ENCODE measurements at regions of chr20 and their contacts with region 1.

Region 1: GRCh38 chr20:57391074-57391554 is at the start of gene RBM38:
- DNase-seq: peak; percentile 37 to 62 (median 62)
- H3K4me3 ChIP-seq: peak within 1 kb of the TSS; percentile 67 to 84 (median 68)
- H3K4me3 Mint-ChIP-seq: peak within 1 kb of the TSS; percentile 90 to 93
- H3K27ac ChIP-seq: peak within 1 kb of the TSS; percentile 51 to 67
- H3K27ac Mint-ChIP-seq: peak within 1 kb of the TSS; percentile 34 to 92 (median 75)
- H3K4me1 ChIP-seq: peaks cover 45 to 55% of the 10 kb centered on the region in 2 donors
- H3K4me1 Mint-ChIP-seq: peaks cover 55% of the 10 kb centered on the region
- H3K27me3 ChIP-seq: no peaks in the 10 kb centered on the region
- H3K27me3 Mint-ChIP-seq: peaks cover 2 to 12% (median 3%) of the 10 kb centered on the region in 3 donors
- CTCF ChIP-seq: no peak
- polyA plus RNA-seq, gene RBM38: 7.5 to 48.3 (median 17.8) TPM

Region 2: GRCh38 chr20:57450419-57450818 is 59.3 kb after region 1 on chr20:
- intact Hi-C with region 1: loop called in 1 of 2 experiments (anchors 5 kb)
- DNase-seq: peak; percentile 86 to 92 (median 92)
- H3K4me3 ChIP-seq: peak overlapping the region in 1 of 3 experiments; percentile 49
- H3K4me3 Mint-ChIP-seq: peak overlapping the region; percentile 72 to 85
- H3K27ac ChIP-seq: peak overlapping the region; percentile 77 to 84
- H3K27ac Mint-ChIP-seq: peak overlapping the region; percentile 94 to 99 (median 98)
- H3K4me1 ChIP-seq: peaks cover 49 to 63% of the 10 kb centered on the region in 2 donors
- H3K4me1 Mint-ChIP-seq: peaks cover 67% of the 10 kb centered on the region
- H3K27me3 ChIP-seq: no peaks in the 10 kb centered on the region
- H3K27me3 Mint-ChIP-seq: peaks cover 0 to 5% (median 4%) of the 10 kb centered on the region in 3 donors
- CTCF ChIP-seq: no peak

Region 3: GRCh38 chr20:57473246-57474048 is 82.3 kb after region 1 on chr20:
- intact Hi-C with region 1: loop called in 1 of 2 experiments (anchors 10 kb)
- DNase-seq: peak; percentile 71 to 85 (median 85)
- H3K4me3 ChIP-seq: peak overlapping the region in 1 of 3 experiments; percentile 66
- H3K4me3 Mint-ChIP-seq: peak overlapping the region; percentile 50 to 78
- H3K27ac ChIP-seq: peak overlapping the region; percentile 58 to 77
- H3K27ac Mint-ChIP-seq: peak overlapping the region; percentile 83 to 93 (median 91)
- H3K4me1 ChIP-seq: peaks cover 69 to 72% of the 10 kb centered on the region in 2 donors
- H3K4me1 Mint-ChIP-seq: peaks cover 63% of the 10 kb centered on the region
- H3K27me3 ChIP-seq: no peaks in the 10 kb centered on the region
- H3K27me3 Mint-ChIP-seq: peaks cover 7 to 20% (median 12%) of the 10 kb centered on the region in 3 donors
- CTCF ChIP-seq: peak; percentile 39

Region 4: GRCh38 chr20:57530327-57530981 is 139.3 kb after region 1 on chr20:
- intact Hi-C with region 1: no loop called
- DNase-seq: no peak
- H3K4me3 ChIP-seq: no peak overlapping the region
- H3K4me3 Mint-ChIP-seq: no peak overlapping the region
- H3K27ac ChIP-seq: no peak overlapping the region
- H3K27ac Mint-ChIP-seq: no peak overlapping the region
- H3K4me1 ChIP-seq: no peaks in the 10 kb centered on the region
- H3K4me1 Mint-ChIP-seq: no peaks in the 10 kb centered on the region
- H3K27me3 ChIP-seq: peaks cover 2% of the 10 kb centered on the region in 2 donors
- H3K27me3 Mint-ChIP-seq: peaks cover 3 to 20% (median 19%) of the 10 kb centered on the region in 3 donors
- CTCF ChIP-seq: no peak